ENCODE measurements at regions of chr7 and their contacts with region 1.

Region 1: GRCh38 chr7:149460493-149461277 is at the start of gene ZNF777:
- DNase-seq: peak; percentile 83 to 88
- H3K4me3 ChIP-seq: peak within 1 kb of the TSS; percentile 73 to 93
- H3K27ac ChIP-seq: peak within 1 kb of the TSS; percentile 86 to 89
- H3K4me1 ChIP-seq: peaks cover 0 to 30% (median 20%) of the 10 kb centered on the region in 4 donors
- H3K27me3 ChIP-seq: no peaks in the 10 kb centered on the region
- CTCF ChIP-seq: peak; percentile 45 to 50

Region 2: DNA sequence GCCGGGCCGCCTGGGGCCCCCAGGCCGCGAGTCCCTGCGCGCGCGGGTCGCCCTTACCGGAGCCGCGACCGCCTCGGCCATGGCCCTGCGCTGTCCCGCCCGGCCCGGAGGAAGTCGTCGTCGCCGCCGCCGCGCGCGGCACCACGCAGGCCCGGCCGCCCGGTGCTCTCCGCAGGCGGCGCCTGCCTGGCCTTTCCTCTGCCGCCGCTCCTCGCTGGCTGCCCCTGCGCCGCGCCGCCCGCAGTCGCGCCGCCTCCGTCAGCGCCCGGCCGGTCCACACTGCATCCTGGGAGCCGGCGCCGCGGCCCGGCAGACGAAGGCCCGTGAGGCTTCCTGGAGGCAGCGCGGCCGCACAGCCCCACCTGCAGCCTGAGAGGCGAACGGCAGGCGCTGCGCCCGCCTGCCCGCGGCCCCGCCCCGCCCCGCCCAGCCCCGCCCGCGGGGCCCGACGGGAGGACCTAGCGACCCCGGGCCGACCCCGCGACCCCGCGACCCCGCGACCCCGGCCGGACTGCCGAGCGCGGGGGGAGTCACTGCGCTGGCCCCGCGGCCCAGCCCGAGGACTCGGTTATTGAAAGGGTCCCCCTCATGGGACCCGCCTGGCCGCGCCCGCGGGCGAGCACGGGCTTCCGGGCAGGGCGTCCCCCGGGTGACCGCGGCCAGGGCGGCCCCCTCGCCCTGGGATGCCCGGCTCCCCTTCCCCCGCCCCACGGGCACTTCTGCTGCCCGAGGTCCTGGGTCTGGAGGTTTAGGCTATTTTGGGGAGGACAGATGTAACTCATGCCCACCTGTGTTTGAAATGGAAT is 37.0 kb after region 1 on chr7 and contains the start of gene ZNF746:
- intact Hi-C with region 1: loop called (anchors 5 kb)
- DNase-seq: peak; percentile 75 to 87
- H3K4me3 ChIP-seq: peak within 1 kb of the TSS; percentile 73 to 90
- H3K27ac ChIP-seq: peak within 1 kb of the TSS; percentile 87 to 92
- H3K4me1 ChIP-seq: peaks cover 3 to 21% (median 15%) of the 10 kb centered on the region in 4 donors
- H3K27me3 ChIP-seq: no peaks in the 10 kb centered on the region
- CTCF ChIP-seq: peak; percentile 49 to 75

Measured in tibial artery (tissue), 4 donors.